K562 (cell line): ENCODE measurements at regions of chr13 and their contacts with region 1.

Region 1: GRCh38 chr13:25375727-25376358 is 4.1 kb downstream of the ATP8A2 start:
- DNase-seq: peak; percentile 50 to 72 (median 56)
- ATAC-seq: peak; percentile 32
- H3K4me3 ChIP-seq: no peak overlapping the region
- H3K27ac ChIP-seq: no peak overlapping the region
- H3K4me1 ChIP-seq: peaks cover 29 to 34% of the 10 kb centered on the region in 2 experiments; a peak in 4 of 5 replicates
- H3K27me3 ChIP-seq: peaks cover 2 to 10% of the 10 kb centered on the region in 2 experiments; a peak in 2 of 5 replicates
- CTCF ChIP-seq: peak; percentile 56 to 65 (median 61)
- EP300 ChIP-seq: no peak
- POLR2A ChIP-seq: no peak
- RAD21 ChIP-seq: peak; percentile 47 to 67

Region 2: GRCh38 chr13:25232937-25233515 is 142.8 kb before region 1 on chr13:
- CTCF ChIA-PET with region 1: no interaction called
- POLR2A ChIA-PET with region 1: no interaction called
- in situ Hi-C with region 1: no loop called
- intact Hi-C with region 1: loop called (anchors 10 kb)
- DNase-seq: peak; percentile 17 to 34 (median 20)
- ATAC-seq: peak; percentile 83
- H3K4me3 ChIP-seq: no peak overlapping the region
- H3K27ac ChIP-seq: no peak overlapping the region
- H3K4me1 ChIP-seq: no peaks in the 10 kb centered on the region; a peak in 1 of 5 replicates
- H3K27me3 ChIP-seq: peaks cover 10 to 32% of the 10 kb centered on the region in 2 experiments; a peak in 4 of 5 replicates
- CTCF ChIP-seq: peak; percentile 41 to 54 (median 46); a peak in 4 of 6 replicates
- EP300 ChIP-seq: no peak
- POLR2A ChIP-seq: no peak
- RAD21 ChIP-seq: peak in 1 of 2 experiments; percentile 43; a peak in 2 of 4 replicates

Region 3: DNA sequence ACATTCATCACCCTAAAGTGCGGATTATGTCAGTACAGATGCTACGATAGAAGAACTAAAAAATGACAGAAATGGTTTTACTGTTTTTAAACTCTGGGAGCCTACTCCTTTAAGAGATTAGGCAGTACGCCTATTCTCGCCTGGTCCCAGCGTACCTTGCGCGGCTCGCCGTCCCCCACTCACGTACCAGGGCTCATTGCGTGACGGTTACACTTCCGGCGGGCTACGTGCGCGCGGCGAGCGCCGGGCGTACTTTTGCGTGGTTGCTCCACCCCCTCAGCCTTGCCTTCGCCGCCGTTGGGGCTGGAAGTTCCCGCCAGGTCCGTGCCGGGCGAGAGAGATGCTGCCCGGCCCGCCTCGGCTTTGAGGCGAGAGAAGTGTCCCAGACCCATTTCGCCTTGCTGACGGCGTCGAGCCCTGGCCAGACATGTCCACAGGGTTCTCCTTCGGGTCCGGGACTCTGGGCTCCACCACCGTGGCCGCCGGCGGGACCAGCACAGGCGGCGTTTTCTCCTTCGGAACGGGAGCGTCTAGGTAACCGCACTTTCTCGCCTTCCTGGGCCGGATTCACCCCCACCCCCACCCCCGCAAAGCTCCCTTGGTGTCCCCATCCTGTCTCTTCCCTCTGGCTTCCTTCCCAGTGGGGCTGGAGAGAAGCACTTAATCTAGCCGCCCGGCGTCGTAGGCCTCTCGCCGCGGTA is 74.3 kb before region 1 on chr13 and contains the start of gene NUP58:
- CTCF ChIA-PET with region 1: no interaction called
- POLR2A ChIA-PET with region 1: interaction called, 3 read pairs
- in situ Hi-C with region 1: no loop called
- intact Hi-C with region 1: loop called (anchors 10 kb)
- DNase-seq: peak; percentile 74 to 95 (median 79)
- ATAC-seq: peak; percentile 98
- H3K4me3 ChIP-seq: peak within 1 kb of the TSS; percentile 79
- H3K27ac ChIP-seq: peak within 1 kb of the TSS; percentile 93
- H3K4me1 ChIP-seq: peaks cover 0 to 6% of the 10 kb centered on the region in 2 experiments; a peak in 3 of 5 replicates
- H3K27me3 ChIP-seq: no peaks in the 10 kb centered on the region
- CTCF ChIP-seq: no peak
- EP300 ChIP-seq: peak; percentile 62; the same call in 1 of the 2 replicates
- POLR2A ChIP-seq: peak; percentile 91
- RAD21 ChIP-seq: no peak
- polyA plus RNA-seq, gene NUP58: 12.5 to 12.6 TPM